Activated CD4-positive, alpha-beta T cell treated with anti-CD3 and anti-CD28 coated beads, Interleukin-2, amount 10 ng/mL, durations not matched to agents 24 days and 14 days (primary cell): ENCODE measurements at regions of chr7 and their contacts with region 1.

Region 1: DNA sequence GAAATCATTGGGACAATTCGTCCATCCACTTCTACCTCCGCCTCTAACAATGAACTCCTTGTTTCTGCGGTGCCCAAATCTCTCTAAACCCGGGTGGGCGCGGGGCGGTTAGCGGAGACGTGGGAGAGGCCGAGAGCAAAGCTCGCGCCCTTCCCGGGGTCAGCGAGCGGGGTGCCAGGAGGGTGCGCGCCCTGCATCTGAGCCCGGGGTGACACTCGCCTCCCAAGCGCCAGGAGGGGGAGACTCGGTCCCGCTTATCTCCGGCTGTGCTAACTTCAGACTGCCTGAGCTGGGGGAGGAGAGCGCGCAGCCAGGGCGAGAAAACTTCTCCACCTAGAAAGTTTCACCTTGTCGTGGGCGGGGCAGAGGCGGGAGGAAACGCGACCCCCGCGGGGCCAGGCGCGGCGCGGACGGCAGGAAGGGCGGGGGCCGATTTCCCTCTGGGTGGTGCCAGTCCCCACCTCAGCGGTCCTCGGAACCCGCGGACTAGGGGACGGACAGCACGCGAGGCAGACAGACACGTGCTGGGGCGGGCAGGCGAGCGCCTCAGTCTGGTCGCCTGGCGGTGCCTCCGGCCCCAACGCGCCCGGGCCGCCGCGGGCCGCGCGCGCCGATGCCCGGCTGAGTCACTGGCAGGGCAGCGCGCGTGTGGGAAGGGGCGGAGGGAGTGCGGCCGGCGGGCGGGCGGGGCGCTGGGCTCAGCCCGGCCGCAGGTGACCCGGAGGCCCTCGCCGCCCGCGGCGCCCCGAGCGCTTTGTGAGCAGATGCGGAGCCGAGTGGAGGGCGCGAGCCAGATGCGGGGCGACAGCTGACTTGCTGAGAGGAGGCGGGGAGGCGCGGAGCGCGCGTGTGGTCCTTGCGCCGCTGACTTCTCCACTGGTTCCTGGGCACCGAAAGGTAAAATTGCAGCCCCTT is at the start of gene MET:
- DNase-seq: peak; percentile 75
- H3K4me3 Mint-ChIP-seq: peak within 1 kb of the TSS; percentile 75
- H3K27ac Mint-ChIP-seq: peak within 1 kb of the TSS; percentile 71
- H3K4me1 Mint-ChIP-seq: peaks cover 9% of the 10 kb centered on the region
- H3K27me3 Mint-ChIP-seq: peaks cover 69% of the 10 kb centered on the region
- total RNA-seq, gene MET: 2.2 and 2.3 TPM in 2 replicates

Region 2: DNA sequence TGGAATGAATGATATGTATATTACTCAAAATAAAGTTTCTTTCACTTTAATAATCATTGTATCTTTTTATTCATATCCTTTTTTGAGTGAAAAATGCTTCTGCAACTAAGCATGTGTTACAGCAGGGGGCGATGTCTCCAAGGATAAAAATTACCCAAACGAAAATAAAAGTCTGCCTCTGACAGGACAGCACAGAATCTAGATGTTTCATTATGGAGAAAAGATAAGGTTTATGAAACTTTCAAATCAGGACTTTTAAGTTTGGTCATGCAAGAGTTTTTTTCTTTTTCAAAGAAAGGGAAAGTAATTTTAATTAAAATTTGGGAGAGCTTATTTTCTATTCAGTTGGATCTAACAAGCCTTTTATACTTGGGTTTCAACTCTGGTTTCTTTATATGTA is 413.2 kb before region 1 on chr7:
- intact Hi-C with region 1: loop called (anchors 10 kb)
- DNase-seq: peak; percentile 76
- H3K4me3 Mint-ChIP-seq: no peak overlapping the region
- H3K27ac Mint-ChIP-seq: no peak overlapping the region
- H3K4me1 Mint-ChIP-seq: peaks cover 3% of the 10 kb centered on the region
- H3K27me3 Mint-ChIP-seq: peaks cover 1% of the 10 kb centered on the region

Region 3: DNA sequence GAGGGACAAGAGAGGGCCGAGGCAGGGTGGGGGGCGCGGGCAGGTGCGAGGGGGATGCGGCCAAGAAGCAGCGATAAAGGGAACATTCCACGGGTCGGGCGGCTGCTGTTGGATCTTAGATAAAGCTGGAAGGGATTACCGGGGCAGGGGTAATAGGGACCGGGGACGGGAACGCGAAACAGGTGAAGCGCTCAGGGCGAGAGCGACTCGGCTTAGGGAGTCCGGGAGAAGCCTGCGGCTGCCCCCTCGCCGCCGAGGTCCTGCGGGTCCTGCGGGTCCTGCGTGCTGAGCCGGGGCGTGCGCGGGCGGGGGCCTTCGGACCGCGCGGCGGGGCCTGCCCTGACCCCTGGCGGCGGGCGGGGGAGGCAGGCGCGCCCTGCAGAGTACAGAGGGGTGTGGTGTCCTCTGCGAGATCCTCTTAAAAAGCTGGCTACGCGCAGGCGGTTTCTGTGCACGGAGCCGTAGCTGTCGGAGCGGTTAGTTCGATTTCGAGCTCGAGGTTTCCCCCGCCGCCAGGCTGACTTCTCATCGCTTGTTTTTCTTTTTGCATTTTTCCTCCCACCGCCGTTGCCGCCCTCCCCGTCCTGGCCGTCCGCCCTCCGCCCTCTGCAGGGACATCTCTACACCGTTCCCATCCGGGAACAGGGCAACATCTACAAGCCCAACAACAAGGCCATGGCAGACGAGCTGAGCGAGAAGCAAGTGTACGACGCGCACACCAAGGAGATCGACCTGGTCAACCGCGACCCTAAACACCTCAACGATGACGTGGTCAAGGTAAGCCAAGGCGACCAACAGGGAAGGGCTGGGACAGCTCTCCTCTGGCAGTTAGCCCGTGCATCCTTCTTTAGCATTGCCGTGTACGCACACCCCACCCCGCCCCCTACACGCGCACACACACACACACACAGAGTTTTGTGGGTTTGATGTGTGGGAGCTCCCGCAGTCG is 145.8 kb before region 1 on chr7:
- intact Hi-C with region 1: loop called (anchors 10 kb)
- DNase-seq: peak; percentile 89
- H3K4me3 Mint-ChIP-seq: peak overlapping the region; percentile 88
- H3K27ac Mint-ChIP-seq: peak overlapping the region; percentile 67
- H3K4me1 Mint-ChIP-seq: peaks cover 27% of the 10 kb centered on the region
- H3K27me3 Mint-ChIP-seq: peaks cover 81% of the 10 kb centered on the region

Region 4: GRCh38 chr7:116786791-116787443 is 115.0 kb after region 1 on chr7:
- intact Hi-C with region 1: loop called (anchors 5 kb)
- DNase-seq: peak; percentile 65
- H3K4me3 Mint-ChIP-seq: no peak overlapping the region
- H3K27ac Mint-ChIP-seq: no peak overlapping the region
- H3K4me1 Mint-ChIP-seq: no peaks in the 10 kb centered on the region
- H3K27me3 Mint-ChIP-seq: peaks cover 6% of the 10 kb centered on the region

Region 5: DNA sequence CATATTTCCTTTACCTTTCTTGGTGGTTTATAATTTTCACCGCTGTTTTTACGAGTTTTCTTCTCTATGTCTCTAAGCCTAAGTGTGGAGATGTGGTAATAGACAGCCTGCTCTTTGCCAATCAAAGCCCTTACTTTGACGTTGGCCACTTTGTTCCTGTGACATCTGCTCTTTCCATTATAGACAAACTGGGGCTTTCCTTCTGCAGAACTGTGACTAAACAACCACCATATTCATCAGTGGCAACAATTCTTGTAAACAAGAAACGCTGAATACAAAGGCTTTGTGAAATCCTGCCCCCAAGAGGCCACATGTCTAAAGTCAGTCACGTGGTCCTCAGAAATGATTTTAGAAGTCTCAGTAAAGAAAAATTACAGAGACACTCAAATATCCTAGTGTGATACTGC is 130.8 kb after region 1 on chr7:
- intact Hi-C with region 1: loop called (anchors 1 kb)
- DNase-seq: peak; percentile 76
- H3K4me3 Mint-ChIP-seq: no peak overlapping the region
- H3K27ac Mint-ChIP-seq: peak overlapping the region; percentile 55
- H3K4me1 Mint-ChIP-seq: peaks cover 8% of the 10 kb centered on the region
- H3K27me3 Mint-ChIP-seq: peaks cover 18% of the 10 kb centered on the region

Region 6: GRCh38 chr7:116809636-116810266 is 137.8 kb after region 1 on chr7:
- intact Hi-C with region 1: loop called (anchors 2 kb)
- DNase-seq: peak; percentile 71
- H3K4me3 Mint-ChIP-seq: no peak overlapping the region
- H3K27ac Mint-ChIP-seq: no peak overlapping the region
- H3K4me1 Mint-ChIP-seq: no peaks in the 10 kb centered on the region
- H3K27me3 Mint-ChIP-seq: peaks cover 11% of the 10 kb centered on the region